ENCODE measurements at regions of chr20 and their contacts with region 1.

Region 1: DNA sequence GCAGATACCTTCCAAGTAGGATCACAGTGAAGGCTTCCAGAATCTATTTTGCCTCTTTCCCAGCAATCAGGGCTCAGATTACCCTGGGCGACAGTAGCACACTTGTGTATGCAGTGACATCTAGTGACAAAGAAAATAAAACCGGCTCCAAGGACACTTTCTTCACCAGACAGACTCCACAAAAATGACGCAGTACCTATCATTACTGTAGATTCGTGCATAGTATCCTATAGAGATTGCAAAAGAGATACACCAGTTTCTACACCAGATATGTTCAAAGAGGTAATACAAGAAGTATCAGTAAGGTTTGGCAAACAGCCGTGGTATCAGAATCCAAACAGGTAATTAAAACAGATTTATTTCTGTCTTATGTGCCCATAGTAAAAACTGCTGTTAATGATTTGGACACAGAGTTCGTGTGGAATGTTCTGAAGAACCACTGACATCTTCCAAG is 600.4 kb upstream of the JAG1 start:
- DNase-seq: peak; percentile 81
- H3K4me3 ChIP-seq: no peak overlapping the region
- H3K27ac ChIP-seq: no peak overlapping the region
- H3K4me1 ChIP-seq: no peaks in the 10 kb centered on the region
- H3K27me3 ChIP-seq: no peaks in the 10 kb centered on the region
- CTCF ChIP-seq: peak; percentile 48 to 61

Region 2: DNA sequence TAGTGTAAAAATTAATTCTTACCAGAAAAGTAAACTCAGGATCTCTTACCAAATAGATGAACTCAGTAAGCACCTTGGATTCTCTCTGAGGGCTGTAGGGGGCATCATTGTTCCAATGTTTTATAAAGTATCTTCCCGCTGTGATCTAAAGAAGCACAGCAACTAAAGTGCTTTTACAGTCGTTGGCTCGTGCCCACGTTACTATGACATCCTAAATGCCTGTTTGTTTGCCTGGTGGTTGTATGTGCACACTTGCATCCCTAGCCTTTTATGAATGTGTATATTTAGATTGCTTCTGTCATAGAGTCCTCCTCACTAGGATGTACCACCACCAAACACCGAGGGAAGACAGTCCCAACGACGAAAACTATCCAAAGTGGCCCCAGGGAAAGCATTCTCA is 804.6 kb before region 1 on chr20:
- CTCF ChIA-PET with region 1: no interaction called
- dilution Hi-C with region 1: no loop called
- in situ Hi-C with region 1: loop called in 1 of 2 experiments (anchors 25 kb)
- intact Hi-C with region 1: loop called (anchors 2 kb)
- DNase-seq: peak; percentile 73
- H3K4me3 ChIP-seq: no peak overlapping the region
- H3K27ac ChIP-seq: peak overlapping the region; percentile 37
- H3K4me1 ChIP-seq: peaks cover 20% of the 10 kb centered on the region
- H3K27me3 ChIP-seq: no peaks in the 10 kb centered on the region
- CTCF ChIP-seq: peak; percentile 73 to 75

Region 3: DNA sequence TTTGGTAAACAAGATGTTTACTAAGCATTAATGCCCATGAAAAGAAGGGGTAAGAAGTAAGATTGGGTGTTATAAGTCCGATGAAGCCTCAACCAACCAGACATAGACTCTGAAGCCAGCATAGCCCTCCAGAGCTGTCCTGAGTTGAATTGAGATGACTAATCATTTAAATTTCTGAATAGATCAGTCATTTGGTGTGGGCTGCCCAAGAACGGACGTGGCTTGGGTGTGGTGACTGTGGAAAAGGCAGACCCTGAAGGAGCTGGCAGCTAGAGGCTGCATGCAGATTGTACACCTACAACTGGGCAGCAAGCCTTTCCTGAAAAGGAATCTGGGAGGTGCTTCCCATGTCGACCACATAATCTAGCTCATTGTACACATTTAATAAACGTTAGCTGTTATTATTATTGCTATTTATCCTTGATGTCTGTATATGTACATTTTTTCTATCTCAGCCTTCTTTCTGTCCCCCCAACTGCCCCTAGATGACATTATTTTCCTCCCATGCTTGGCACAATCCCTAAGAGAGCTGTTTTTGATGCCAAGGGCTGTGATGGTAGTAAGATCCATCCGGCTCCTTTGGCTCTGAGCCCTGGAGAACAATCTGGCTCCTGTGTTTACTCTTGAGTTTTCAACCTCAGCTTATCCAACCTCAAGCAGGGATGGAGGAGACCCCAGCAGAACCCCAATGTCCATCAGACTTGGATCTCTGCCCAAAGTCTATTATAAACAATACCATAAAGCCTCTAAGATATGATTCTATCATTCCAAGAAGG is 542.8 kb before region 1 on chr20:
- CTCF ChIA-PET with region 1: no interaction called
- dilution Hi-C with region 1: no loop called
- in situ Hi-C with region 1: no loop called
- intact Hi-C with region 1: loop called (anchors 10 kb)
- DNase-seq: peak; percentile 64
- H3K4me3 ChIP-seq: no peak overlapping the region
- H3K27ac ChIP-seq: peak overlapping the region; percentile 64
- H3K4me1 ChIP-seq: peaks cover 47% of the 10 kb centered on the region
- H3K27me3 ChIP-seq: no peaks in the 10 kb centered on the region
- CTCF ChIP-seq: no peak

Region 4: GRCh38 chr20:11098888-11099287 is 175.3 kb before region 1 on chr20:
- CTCF ChIA-PET with region 1: no interaction called
- dilution Hi-C with region 1: no loop called
- in situ Hi-C with region 1: no loop called
- intact Hi-C with region 1: loop called (anchors 1 kb)
- DNase-seq: peak; percentile 28
- H3K4me3 ChIP-seq: no peak overlapping the region
- H3K27ac ChIP-seq: no peak overlapping the region
- H3K4me1 ChIP-seq: peaks cover 4% of the 10 kb centered on the region
- H3K27me3 ChIP-seq: no peaks in the 10 kb centered on the region
- CTCF ChIP-seq: peak in 1 of 2 donors; percentile 55

Region 5: DNA sequence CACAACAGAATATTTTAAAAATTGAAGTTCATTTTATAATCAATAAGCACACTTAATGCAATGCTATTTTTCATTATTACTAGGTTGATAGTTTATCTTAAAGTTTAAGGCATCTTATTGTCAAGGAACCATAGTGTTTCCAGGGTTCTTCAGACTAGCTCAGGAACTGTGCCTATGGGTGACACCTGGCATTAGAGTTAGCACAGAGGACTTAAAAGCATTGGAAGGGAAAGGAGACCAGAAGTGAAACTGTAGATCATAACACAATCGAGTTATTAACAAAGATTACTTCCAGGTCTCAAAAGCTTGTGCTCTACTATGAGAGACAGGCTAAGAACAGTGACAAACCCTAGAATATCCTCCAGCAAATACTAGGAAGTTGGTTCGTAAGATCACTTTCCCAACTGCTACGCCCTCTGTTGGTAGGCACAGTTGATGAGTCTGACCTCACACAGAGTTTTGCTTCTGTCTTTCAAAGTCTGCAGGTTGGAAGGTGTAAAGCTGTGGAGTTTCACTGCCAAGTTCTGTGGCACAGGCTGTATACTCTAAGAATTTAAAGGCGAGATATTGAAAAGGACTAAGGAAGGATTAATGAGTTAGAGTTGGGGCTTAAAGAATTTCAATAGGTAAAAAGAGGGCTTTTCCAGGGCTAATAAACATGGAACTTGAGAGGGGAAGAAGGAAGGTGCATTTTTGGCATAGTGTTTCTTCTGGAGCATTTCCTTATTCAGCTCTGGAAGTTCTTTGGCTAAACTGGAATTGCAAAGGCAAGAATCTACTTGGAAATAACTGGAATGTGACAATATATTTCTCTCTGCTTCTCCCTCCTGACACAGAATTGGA is 69.0 kb before region 1 on chr20:
- CTCF ChIA-PET with region 1: interaction called, 4 read pairs
- dilution Hi-C with region 1: loop called (anchors 5 kb)
- in situ Hi-C with region 1: no loop called
- intact Hi-C with region 1: loop called (anchors 1 kb)
- DNase-seq: peak; percentile 69
- H3K4me3 ChIP-seq: no peak overlapping the region
- H3K27ac ChIP-seq: peak overlapping the region; percentile 65
- H3K4me1 ChIP-seq: peaks cover 46% of the 10 kb centered on the region
- H3K27me3 ChIP-seq: no peaks in the 10 kb centered on the region
- CTCF ChIP-seq: peak; percentile 84 to 95

Region 6: GRCh38 chr20:11454966-11455799 is 181.0 kb after region 1 on chr20:
- CTCF ChIA-PET with region 1: no interaction called
- dilution Hi-C with region 1: no loop called
- in situ Hi-C with region 1: no loop called
- intact Hi-C with region 1: loop called (anchors 10 kb)
- DNase-seq: peak; percentile 86
- H3K4me3 ChIP-seq: peak overlapping the region; percentile 33 to 48 (median 37)
- H3K27ac ChIP-seq: peak overlapping the region; percentile 93
- H3K4me1 ChIP-seq: peaks cover 71% of the 10 kb centered on the region
- H3K27me3 ChIP-seq: no peaks in the 10 kb centered on the region
- CTCF ChIP-seq: no peak